ENCODE measurements at regions of chrX and their contacts with region 1.

Region 1: GRCh38 chrX:100636321-100636991 is at the start of gene TSPAN6:
- DNase-seq: peak; percentile 35 to 81 (median 68)
- ATAC-seq: peak; percentile 99
- H3K4me3 ChIP-seq: peak within 1 kb of the TSS; percentile 50
- H3K4me3 Mint-ChIP-seq: peak within 1 kb of the TSS; percentile 80 to 99 (median 92)
- H3K27ac ChIP-seq: peak within 1 kb of the TSS; percentile 63
- H3K27ac Mint-ChIP-seq: peak within 1 kb of the TSS in 8 of 9 donors; percentile 50 to 94 (median 88)
- H3K4me1 ChIP-seq: no peaks in the 10 kb centered on the region
- H3K4me1 Mint-ChIP-seq: peaks cover 0 to 21% (median 15%) of the 10 kb centered on the region in 7 donors
- H3K27me3 ChIP-seq: no peaks in the 10 kb centered on the region
- H3K27me3 Mint-ChIP-seq: peaks cover 3 to 25% (median 10%) of the 10 kb centered on the region in 5 donors
- total RNA-seq, gene TSPAN6: 1.0 to 2.3 (median 1.9) TPM in 4 of 5 experiments, not detected in the other

Region 2: GRCh38 chrX:100512471-100512870 is 124.0 kb before region 1 on chrX:
- CTCF ChIA-PET with region 1: no interaction called
- POLR2A ChIA-PET with region 1: no interaction called
- intact Hi-C with region 1: loop called (anchors 1 kb)
- DNase-seq: peak in 4 of 9 donors; percentile 1 to 15 (median 4)
- ATAC-seq: no peak
- H3K4me3 ChIP-seq: no peak overlapping the region
- H3K4me3 Mint-ChIP-seq: no peak overlapping the region
- H3K27ac ChIP-seq: no peak overlapping the region
- H3K27ac Mint-ChIP-seq: no peak overlapping the region
- H3K4me1 ChIP-seq: no peaks in the 10 kb centered on the region
- H3K4me1 Mint-ChIP-seq: no peaks in the 10 kb centered on the region
- H3K27me3 ChIP-seq: no peaks in the 10 kb centered on the region
- H3K27me3 Mint-ChIP-seq: peaks cover 0 to 4% (median 0%) of the 10 kb centered on the region in 5 donors

Region 3: DNA sequence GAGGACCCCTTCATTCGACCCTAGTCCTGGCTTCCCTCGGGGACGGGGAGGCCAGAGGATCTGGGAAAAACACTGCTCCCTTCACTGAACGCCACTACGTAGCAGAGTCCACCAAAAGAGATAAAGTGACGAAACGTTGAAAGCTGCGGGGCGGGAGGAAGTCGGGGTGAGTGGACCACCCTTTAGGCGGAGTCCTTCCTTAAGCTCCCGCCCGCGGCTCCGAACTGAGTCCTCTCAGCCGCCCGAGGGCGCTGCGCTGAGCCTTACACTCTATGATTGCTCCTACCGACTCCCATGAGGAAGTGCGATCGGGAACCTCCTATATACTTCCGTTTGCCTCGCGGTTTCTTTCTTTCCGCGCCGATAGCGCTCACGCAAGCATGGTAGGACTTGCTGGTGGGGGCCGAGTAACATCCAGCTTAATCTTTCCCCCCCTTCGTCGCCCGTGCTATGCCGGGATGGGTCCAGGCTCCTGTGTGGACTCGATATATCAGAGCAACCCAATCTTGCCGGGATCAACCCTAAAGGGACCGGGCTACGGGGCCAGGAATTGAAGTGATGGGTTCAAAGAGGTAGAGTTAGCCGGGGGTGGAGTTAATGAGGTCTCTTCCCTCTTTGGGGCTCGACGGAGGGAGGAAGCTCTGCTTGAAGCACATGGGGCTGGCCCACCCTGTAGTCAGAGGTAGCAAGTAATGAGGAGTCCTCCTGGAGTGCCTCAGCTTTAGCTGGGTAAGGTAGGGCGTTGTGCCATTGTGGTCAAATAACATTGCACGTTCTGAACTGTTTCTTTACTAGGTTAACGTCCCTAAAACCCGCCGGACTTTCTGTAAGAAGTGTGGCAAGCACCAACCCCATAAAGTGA is 754.4 kb after region 1 on chrX and contains the start of gene RPL36A:
- CTCF ChIA-PET with region 1: no interaction called
- POLR2A ChIA-PET with region 1: no interaction called
- intact Hi-C with region 1: loop called in 1 of 2 experiments (anchors 5 kb)
- DNase-seq: peak; percentile 41 to 75 (median 66)
- ATAC-seq: peak; percentile 97
- H3K4me3 ChIP-seq: peak within 1 kb of the TSS; percentile 66
- H3K4me3 Mint-ChIP-seq: peak within 1 kb of the TSS; percentile 81 to 96 (median 90)
- H3K27ac ChIP-seq: peak within 1 kb of the TSS; percentile 80
- H3K27ac Mint-ChIP-seq: peak within 1 kb of the TSS; percentile 80 to 97 (median 94)
- H3K4me1 ChIP-seq: peaks cover 4 to 5% of the 10 kb centered on the region in 2 donors
- H3K4me1 Mint-ChIP-seq: peaks cover 0 to 35% (median 18%) of the 10 kb centered on the region in 7 donors
- H3K27me3 ChIP-seq: no peaks in the 10 kb centered on the region
- H3K27me3 Mint-ChIP-seq: no peaks in the 10 kb centered on the region
- total RNA-seq, gene RPL36A: 113 to 342 (median 282) TPM